Calu3 (cell line): ENCODE measurements at regions of chr2 and their contacts with region 1.

Region 1: GRCh38 chr2:109594246-109594885 is 19.4 kb downstream of the SEPTIN10 start:
- DNase-seq: no peak
- H3K4me3 Mint-ChIP-seq: no peak overlapping the region
- H3K27ac Mint-ChIP-seq: no peak overlapping the region
- H3K4me1 Mint-ChIP-seq: peaks cover 14% of the 10 kb centered on the region
- H3K27me3 Mint-ChIP-seq: no peaks in the 10 kb centered on the region
- CTCF ChIP-seq: no peak

Region 2: DNA sequence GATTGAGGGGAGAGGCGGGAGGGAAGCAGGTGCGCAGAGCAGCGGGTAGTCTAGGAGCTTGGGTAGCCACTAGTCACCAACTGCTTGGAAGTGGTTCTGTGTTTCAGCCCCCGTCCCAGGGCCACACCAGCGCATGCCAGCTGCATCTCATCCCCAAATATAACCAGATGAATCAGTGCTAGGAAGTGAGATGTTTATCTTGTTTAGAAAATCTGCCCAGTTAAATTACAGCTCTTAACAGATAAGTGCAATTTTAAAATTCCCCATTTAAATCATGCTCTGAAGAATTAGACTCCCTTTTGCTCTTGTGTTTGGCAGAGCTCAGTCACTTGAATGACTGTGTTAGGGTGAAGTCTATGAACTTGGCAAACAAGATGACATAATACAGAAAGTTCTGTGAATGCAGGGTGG is 174.4 kb before region 1 on chr2:
- CTCF ChIA-PET with region 1: no interaction called
- intact Hi-C with region 1: no loop called
- DNase-seq: no peak
- H3K4me3 Mint-ChIP-seq: no peak overlapping the region
- H3K27ac Mint-ChIP-seq: no peak overlapping the region
- H3K4me1 Mint-ChIP-seq: no peaks in the 10 kb centered on the region
- H3K27me3 Mint-ChIP-seq: peaks cover 89% of the 10 kb centered on the region
- CTCF ChIP-seq: no peak

Region 3: GRCh38 chr2:109558076-109558882 is 36.1 kb before region 1 on chr2:
- CTCF ChIA-PET with region 1: no interaction called
- intact Hi-C with region 1: loop called (anchors 5 kb)
- DNase-seq: peak; percentile 67
- H3K4me3 Mint-ChIP-seq: peak overlapping the region; percentile 17
- H3K27ac Mint-ChIP-seq: peak overlapping the region; percentile 93
- H3K4me1 Mint-ChIP-seq: peaks cover 32% of the 10 kb centered on the region
- H3K27me3 Mint-ChIP-seq: no peaks in the 10 kb centered on the region
- CTCF ChIP-seq: no peak